Heart right ventricle (tissue), 16 donors: ENCODE measurements at regions of chr3 and their contacts with region 1.

Region 1: DNA sequence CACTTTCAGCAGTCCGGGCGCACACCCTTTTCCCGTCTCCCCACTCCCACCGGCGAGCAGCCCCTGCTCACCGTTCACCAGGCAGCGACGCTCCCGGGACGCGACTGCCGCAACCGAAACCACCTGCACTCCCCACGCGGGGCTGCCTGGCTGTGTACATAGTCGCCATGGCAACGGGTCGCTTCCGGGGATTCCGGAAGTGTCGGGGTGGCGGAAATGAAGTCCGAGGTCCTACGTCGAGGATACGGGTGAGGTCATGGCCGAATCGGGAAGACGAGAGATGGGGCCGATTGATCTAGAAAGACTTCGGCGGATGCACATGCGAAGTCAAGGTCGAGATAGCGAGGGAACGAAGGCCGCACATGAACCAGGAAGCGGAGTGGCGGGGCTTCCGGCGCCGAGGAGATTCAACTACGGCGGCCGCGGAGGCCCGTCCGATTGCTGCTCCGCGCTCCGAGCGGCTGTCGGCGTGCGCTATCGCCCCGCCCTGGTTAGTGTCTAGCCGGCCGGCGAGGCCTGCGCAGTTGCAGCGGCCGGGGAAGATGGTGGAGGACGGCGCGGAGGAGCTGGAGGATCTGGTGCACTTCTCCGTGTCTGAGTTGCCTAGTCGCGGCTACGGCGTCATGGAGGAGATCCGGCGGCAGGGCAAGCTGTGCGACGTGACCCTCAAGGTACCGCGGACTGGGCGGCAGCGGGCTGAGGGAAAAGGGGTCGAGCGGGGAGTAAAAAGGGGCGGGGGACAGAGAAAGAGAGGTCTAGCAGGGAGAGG is at the starts of genes KIF9 and KLHL18:
- DNase-seq: peak; percentile 91 to 95
- ATAC-seq: peak; percentile 95 to 99 (median 97)
- H3K4me3 ChIP-seq: peak within 1 kb of the TSS; percentile 57 to 92 (median 79)
- H3K27ac ChIP-seq: peak within 1 kb of the TSS; percentile 74 to 96 (median 94)
- H3K4me1 ChIP-seq: peaks cover 3 to 53% (median 33%) of the 10 kb centered on the region in 9 donors
- H3K27me3 ChIP-seq: no peaks in the 10 kb centered on the region
- CTCF ChIP-seq: peak in 1 of 9 donors; percentile 5
- total RNA-seq, gene KIF9: 6.3 to 12.9 (median 8.5) TPM
- total RNA-seq, gene KLHL18: 32.1 to 52.5 (median 41.6) TPM

Region 2: GRCh38 chr3:47164007-47164881 is 118.4 kb before region 1 on chr3 and contains the start of gene SETD2:
- intact Hi-C with region 1: loop called in 1 of 10 experiments (anchors 10 kb)
- DNase-seq: peak; percentile 96
- ATAC-seq: peak; percentile 96 to 98 (median 97)
- H3K4me3 ChIP-seq: peak within 1 kb of the TSS; percentile 81 to 99 (median 95)
- H3K27ac ChIP-seq: peak within 1 kb of the TSS; percentile 91 to 98 (median 96)
- H3K4me1 ChIP-seq: peaks cover 8 to 55% (median 51%) of the 10 kb centered on the region in 9 donors
- H3K27me3 ChIP-seq: no peaks in the 10 kb centered on the region
- CTCF ChIP-seq: peak in 8 of 9 donors; percentile 24 to 57 (median 40)
- total RNA-seq, gene SETD2: 23.5 to 34.4 (median 30.6) TPM

Region 3: DNA sequence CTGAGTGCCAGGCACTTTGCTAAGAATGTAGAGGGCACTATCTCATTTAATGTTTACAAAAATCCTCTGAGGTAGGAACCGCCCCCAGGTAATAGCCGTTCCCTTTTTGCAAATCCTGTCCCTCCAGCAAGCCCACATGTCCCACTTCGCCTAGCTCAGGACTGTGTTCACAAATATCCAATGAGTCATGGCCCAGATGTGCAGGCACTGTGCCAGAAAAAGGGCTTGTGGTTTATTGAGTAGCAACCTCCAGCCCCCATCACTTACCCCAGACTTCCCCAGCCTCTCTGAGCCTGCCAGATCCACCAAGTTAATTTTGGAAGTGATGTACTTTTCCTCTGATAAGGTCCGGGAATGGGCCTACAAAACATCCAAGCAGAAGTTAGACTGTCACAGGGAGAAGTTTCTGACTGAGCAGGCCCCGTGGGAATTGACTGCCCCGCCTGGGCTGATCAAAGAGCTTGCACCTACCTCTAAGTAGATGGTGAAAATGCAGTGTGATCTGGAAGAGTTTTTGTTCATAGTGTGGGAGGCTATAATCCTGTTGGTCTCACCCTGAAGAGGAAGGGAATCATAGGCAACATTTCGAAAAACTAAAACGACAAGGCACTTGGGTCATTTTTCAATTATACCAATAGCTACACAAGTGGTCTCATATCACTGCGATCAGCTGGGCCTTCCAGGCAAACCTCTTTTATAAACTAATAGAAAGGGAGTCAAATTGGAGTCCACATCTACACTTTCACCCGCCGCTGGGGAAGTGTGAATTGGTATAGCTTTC is 15.7 kb before region 1 on chr3:
- intact Hi-C with region 1: loop called in 1 of 10 experiments (anchors 1 kb)
- DNase-seq: peak; percentile 77 to 96
- ATAC-seq: peak; percentile 92 to 98 (median 96)
- H3K4me3 ChIP-seq: no peak overlapping the region
- H3K27ac ChIP-seq: peak overlapping the region in 9 of 10 donors; percentile 54 to 80 (median 62)
- H3K4me1 ChIP-seq: peaks cover 3 to 25% (median 17%) of the 10 kb centered on the region in 9 donors
- H3K27me3 ChIP-seq: no peaks in the 10 kb centered on the region
- CTCF ChIP-seq: no peak

Region 4: DNA sequence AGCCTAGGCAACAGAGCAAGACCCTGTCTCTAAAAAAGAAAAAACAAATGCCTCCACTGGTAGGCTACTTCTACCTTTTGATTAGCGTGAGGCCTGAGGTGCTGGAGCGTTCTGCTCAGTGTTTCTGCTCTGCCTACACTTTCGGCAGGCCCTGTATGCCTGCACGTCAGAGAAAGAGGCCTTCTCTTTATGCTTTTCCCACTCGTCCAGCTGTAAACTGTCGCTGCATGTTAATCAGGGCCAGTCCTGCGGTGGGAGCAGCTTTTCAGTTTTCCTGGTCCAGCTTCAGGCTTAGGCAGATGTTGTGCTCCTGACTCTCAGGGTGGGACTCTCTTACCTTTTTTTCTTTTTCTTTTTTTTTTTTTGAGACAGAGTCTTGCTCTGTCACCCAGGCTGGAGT is 270.8 kb after region 1 on chr3:
- intact Hi-C with region 1: no loop called
- DNase-seq: no peak
- ATAC-seq: no peak
- H3K4me3 ChIP-seq: no peak overlapping the region
- H3K27ac ChIP-seq: no peak overlapping the region
- H3K4me1 ChIP-seq: no peaks in the 10 kb centered on the region
- H3K27me3 ChIP-seq: peaks cover 0 to 3% (median 0%) of the 10 kb centered on the region in 7 donors
- CTCF ChIP-seq: no peak

Region 5: DNA sequence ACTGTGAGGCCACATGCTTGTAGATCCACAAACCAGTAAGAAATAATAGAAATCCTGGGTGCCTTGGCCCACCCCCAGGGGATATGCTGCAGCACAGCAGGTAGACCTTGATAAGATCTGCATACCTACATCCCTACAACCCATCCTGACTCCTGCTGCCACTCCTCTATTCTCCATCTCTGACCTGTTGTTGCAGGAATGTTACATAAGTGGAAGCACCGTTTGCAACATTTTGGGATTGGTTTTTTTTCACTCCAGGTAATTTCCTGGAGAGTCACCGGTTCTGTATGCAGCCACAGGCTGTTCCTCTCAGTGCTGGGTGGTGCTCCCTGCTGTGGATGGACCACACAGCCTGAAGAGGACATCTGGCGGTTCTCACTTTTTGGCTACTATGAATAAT is 312.2 kb after region 1 on chr3:
- intact Hi-C with region 1: no loop called
- DNase-seq: no peak
- ATAC-seq: no peak
- H3K4me3 ChIP-seq: no peak overlapping the region
- H3K27ac ChIP-seq: no peak overlapping the region
- H3K4me1 ChIP-seq: peaks cover 0 to 4% (median 0%) of the 10 kb centered on the region in 9 donors
- H3K27me3 ChIP-seq: no peaks in the 10 kb centered on the region
- CTCF ChIP-seq: no peak